Astrocyte of the cerebellum (primary cell): ENCODE measurements at regions of chr2 and their contacts with region 1.

Region 1: DNA sequence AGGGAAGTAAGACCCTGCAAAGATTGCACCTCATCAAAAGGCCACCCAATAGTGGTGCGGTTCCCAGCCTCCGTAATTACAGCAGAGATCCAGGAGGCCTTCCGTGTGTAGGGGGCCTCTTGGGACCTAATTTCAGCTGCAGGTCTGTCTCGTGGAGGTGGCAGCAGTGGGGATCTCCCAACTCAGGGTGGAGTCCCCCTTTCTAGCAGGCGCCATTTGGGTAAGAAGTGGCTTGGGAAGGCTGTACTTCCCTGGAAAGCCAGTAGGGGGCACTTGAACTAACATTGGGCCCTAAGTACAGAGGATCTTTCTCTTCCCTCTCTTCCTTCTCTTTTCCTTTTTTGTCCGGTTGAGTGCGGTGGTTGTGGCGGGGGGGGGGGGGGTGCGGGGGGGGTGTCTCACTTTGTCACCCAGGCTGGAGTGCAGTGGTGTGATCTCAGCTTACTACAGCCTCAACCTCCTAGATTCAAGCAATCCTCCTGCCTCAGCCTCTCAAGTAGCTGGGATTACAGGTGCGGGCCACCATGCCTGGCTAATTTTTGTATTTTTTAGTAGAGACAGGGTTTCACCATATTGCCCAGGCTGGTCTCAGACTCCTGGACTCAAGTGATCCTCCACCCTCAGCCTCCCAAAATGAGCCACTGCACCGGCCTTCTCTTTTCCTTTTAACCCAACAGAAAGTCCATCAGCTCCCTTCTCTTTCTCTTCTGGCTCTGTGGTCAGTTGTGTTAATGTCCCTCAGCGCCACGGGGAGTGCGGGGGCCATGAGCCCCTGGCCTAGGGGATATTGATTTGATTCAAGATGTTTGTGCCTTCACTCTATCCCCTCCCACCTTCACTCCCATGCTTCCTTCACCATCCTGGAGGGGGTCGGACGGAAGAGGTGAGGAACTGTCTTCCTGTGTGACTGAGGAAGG is 32.0 kb downstream of the CENPO start:
- DNase-seq: no peak
- H3K4me3 ChIP-seq: no peak overlapping the region
- CTCF ChIP-seq: peak; percentile 49

Region 2: DNA sequence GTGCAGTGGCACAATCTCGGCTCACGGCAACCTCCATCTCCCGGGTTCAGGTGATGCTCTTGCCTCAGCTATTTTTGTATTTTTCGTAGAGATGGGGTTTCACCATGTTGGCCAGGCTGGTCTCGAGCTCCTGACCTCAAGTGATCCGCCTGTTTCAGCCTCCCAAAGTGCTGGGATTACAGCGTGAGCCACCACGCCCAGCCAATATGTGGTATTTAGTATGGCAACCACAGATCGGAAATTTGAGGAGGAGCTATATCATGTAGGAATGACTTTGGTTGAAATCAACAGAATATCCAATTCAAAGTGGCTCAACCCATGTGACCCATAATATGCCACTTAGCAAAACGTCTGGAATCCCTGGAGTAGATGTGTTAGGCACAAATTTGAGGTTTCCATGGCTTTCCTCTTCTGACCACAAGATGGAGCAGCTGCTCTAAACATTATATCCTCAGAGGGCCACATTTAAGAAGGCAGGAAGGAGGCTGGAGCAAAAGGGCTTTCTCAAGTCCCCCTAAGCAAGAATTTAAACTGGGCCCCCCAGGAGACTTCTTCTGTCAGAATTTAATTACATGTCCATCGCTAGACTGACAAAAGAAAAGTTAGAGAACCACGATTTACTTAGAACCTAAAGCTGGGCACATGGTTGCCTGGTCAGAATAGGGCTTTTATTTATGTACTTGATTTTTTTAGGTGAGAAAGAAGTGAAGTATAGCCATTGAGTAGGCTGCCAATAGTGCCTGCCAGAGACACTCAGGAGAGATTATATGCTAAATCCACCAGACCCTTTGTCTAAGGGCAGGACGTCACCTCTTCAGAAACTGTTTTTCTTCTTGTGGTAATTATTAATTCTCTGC is 415.3 kb before region 1 on chr2:
- in situ Hi-C with region 1: loop called (anchors 25 kb)
- DNase-seq: peak; percentile 57
- H3K4me3 ChIP-seq: no peak overlapping the region
- CTCF ChIP-seq: peak; percentile 86

Region 3: DNA sequence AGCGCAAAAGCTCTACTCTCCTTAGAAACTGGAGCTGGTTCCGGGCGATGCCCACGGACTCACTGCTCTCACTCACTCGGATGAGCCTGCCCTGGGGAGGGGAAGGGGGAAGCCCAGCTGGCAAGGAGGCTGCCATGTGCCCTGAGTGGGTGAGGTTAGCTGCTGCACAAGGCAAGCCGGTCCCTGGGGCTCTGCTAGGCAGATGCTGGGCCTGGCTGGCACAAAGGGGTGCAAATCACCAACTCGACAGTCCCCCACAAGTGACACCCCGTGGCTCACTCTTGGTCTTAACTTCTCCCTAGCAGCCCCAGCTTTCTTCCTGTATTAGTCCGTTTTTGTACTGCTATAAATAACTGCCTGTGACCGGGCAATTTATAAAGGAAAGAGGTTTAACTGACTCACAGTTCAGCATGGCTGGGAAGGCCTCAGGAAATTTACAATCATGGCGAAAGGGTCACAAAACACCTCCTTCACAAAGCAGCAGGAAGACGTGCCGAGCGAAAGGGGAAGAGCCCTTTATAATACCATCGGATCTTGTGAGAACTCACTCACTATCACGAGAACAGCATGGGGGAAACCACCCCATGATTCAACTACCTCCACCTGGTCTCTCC is 61.6 kb after region 1 on chr2:
- in situ Hi-C with region 1: no loop called
- DNase-seq: no peak
- H3K4me3 ChIP-seq: no peak overlapping the region
- CTCF ChIP-seq: no peak

Region 4: DNA sequence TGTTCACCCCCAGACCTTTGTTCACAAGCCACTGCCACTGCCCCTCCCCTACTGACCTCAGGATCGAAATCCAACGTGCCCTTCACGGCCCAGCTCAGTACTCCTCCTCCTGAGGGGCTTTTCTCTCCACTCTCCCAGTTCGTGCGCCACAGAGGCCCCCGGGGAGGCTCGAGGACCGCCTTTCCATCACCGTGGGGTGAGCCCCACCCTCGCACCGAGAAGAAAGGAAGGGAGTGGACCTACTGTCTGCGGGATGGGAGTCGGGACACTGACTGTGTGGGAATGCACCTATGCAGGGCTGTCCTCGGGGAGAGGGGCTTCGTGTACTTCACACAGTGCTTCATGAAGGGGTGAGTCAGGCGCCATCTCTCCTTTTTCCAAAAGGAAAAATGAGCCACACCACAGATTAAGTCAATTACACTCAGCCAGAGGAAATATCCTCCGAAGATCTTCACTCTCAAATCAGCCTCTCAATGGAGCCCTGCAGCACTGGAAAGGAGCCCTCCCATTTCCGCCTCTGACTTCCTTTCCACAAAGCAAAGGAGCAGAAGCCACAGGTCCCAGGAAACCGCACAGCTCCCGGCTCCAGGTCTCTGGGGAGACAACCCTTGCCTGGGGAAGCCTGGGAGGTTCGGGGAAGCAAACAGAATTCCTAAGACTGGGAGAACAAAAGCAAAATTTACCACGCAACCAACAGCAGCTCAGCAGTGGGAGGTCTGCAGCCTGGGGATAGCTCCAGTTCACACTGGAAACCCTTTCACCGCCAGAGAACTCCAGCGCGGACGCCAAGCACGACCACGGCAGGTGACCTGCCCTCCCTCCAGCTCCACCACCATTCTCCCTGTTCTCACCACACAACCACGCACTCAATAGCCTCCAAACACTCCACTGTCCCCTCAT is 73.1 kb after region 1 on chr2:
- in situ Hi-C with region 1: no loop called
- DNase-seq: peak; percentile 19
- H3K4me3 ChIP-seq: no peak overlapping the region
- CTCF ChIP-seq: no peak